ENCODE measurements at regions of chr1 and their contacts with region 1.

Region 1: GRCh38 chr1:206982216-206982615 is 12.0 kb upstream of the FCAMR start:
- DNase-seq: no peak
- H3K4me3 ChIP-seq: no peak overlapping the region
- H3K27ac ChIP-seq: no peak overlapping the region
- H3K4me1 ChIP-seq: no peaks in the 10 kb centered on the region
- H3K27me3 ChIP-seq: no peaks in the 10 kb centered on the region
- CTCF ChIP-seq: peak; percentile 66 to 82 (median 81)

Region 2: DNA sequence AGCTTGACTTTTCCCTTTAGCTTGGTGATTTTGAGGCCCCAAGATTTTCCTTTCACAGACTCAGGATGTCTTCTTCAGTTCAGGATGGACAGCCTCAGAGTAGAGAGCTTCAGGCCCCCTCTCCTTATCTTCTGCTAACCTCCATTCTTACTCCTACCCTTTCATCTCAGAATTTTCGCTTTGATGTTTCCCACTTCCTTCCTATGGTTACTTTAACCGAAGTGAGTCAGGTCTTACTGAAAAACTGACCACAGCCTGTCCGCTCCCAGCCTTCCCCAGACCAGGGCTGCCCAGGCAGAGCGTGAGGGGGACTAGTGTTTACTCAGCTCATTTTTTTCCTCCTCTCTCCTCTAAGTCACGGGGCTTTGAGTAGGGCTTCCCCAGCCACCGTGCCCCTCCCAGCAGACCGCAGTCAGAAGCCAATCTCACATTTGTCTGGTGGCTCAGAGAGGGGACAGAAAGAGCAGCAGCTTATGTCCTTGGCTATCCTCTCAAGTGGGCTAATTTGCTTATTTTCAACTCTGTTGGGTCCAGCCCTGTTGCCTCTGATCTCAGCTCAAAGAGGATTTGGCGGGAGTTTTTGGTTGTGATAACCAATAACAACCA is 215.9 kb before region 1 on chr1:
- dilution Hi-C with region 1: loop called (anchors 25 kb)
- DNase-seq: no peak
- H3K4me3 ChIP-seq: no peak overlapping the region
- H3K27ac ChIP-seq: no peak overlapping the region
- H3K4me1 ChIP-seq: peaks cover 5% of the 10 kb centered on the region
- H3K27me3 ChIP-seq: peaks cover 11% of the 10 kb centered on the region
- CTCF ChIP-seq: no peak

Region 3: DNA sequence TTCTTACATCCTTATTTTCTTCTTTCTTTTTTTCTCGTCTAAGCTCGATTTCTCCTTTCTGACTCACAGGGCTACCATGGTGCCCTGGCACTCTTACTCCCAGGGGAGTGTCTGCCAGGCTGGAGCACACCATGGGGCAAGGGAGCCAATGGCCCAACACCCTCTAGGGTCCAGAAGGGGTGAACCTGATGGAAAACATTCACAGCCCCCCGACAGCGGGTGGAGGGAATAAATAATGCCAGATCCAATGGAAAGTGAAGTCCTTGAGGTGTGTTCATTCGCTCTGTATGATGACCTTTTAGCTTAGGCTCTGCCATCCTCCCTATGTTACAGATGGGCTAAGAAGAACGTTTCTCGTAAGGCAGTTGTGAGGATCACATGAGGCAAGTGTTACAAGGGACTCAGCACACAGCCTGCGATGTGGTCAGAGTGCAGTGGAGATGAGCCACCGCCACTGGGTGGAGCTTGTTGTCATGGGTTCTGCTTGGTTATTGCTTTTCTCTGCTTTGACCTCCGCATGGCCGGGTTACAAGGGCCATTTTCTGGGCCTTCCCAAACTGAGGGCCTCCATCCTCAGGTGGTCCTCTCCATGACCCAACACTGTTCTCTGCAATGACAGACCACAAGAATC is 57.0 kb before region 1 on chr1:
- dilution Hi-C with region 1: loop called (anchors 10 kb)
- DNase-seq: no peak
- H3K4me3 ChIP-seq: no peak overlapping the region
- H3K27ac ChIP-seq: no peak overlapping the region
- H3K4me1 ChIP-seq: no peaks in the 10 kb centered on the region
- H3K27me3 ChIP-seq: no peaks in the 10 kb centered on the region
- CTCF ChIP-seq: peak in 1 of 3 experiments; percentile 45